A673 (cell line): ENCODE measurements at regions of chr11 and their contacts with region 1.

Region 1: GRCh38 chr11:75760710-75761493 is 7.7 kb upstream of the DGAT2 start:
- DNase-seq: no peak
- H3K4me3 ChIP-seq: no peak overlapping the region
- H3K27ac ChIP-seq: no peak overlapping the region
- H3K4me1 ChIP-seq: peaks cover 4% of the 10 kb centered on the region
- H3K27me3 ChIP-seq: no peaks in the 10 kb centered on the region
- CTCF ChIP-seq: no peak

Region 2: GRCh38 chr11:75778962-75779361 is 18.1 kb after region 1 on chr11:
- CTCF ChIA-PET with region 1: no interaction called
- POLR2A ChIA-PET with region 1: interaction called, 13 read pairs
- intact Hi-C with region 1: no loop called
- DNase-seq: no peak
- H3K4me3 ChIP-seq: no peak overlapping the region
- H3K27ac ChIP-seq: no peak overlapping the region
- H3K4me1 ChIP-seq: no peaks in the 10 kb centered on the region
- H3K27me3 ChIP-seq: no peaks in the 10 kb centered on the region
- CTCF ChIP-seq: no peak